Dendritic cell treated with granulocyte-macrophage colony-stimulating factor and Interleukin-4, amounts not matched to agents 40 ng/mL and 50 ng/mL, for 4 days (primary cell): ENCODE measurements at regions of chr14 and their contacts with region 1.

Region 1: GRCh38 chr14:103546652-103547454 is 15.6 kb downstream of the BAG5 start:
- H3K4me3 Mint-ChIP-seq: no peak overlapping the region
- H3K27ac Mint-ChIP-seq: no peak overlapping the region
- H3K4me1 Mint-ChIP-seq: no peaks in the 10 kb centered on the region
- H3K27me3 Mint-ChIP-seq: peaks cover 4% of the 10 kb centered on the region

Region 2: DNA sequence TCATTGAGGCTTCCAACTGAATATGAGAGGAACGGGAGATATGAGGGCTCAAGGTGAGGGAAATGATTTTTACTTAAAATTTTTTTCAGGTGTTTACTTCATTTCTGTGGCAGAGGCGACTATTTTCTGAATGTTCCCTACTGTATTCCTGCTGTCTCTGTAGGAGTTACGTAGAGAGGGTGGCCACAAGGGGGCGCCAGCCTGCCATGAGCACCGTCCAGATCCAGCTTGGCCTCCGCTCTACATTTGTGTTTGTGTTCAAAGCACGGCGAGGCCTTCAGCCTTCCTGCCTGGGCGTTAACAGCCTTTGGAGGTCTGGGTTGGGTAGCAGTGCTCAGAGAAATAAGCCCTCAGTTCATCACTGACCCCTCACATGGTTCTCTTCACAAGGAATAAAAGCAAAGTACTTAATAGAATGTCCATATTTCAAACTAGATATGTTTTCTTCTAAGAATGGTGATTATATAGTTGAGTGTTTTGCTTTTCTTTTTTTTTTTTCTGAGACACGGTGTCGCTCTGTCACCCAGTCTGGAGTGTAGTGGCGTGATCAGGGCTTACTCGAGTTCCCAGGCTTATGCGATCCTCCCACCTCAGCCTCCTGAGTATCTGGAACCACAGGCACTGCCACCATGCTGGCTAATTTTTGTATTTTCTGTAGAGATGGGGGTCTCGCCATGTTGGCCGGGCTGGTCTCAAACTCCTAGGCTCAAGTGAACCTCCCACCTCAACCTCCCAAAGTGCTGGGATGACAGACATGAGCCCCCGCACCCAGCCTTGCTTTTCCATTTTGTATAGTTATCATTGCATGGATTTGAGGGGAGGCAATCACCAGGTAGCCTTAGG is 46.5 kb before region 1 on chr14:
- intact Hi-C with region 1: loop called (anchors 1 kb)
- H3K4me3 Mint-ChIP-seq: no peak overlapping the region
- H3K27ac Mint-ChIP-seq: no peak overlapping the region
- H3K4me1 Mint-ChIP-seq: peaks cover 5% of the 10 kb centered on the region
- H3K27me3 Mint-ChIP-seq: no peaks in the 10 kb centered on the region

Region 3: DNA sequence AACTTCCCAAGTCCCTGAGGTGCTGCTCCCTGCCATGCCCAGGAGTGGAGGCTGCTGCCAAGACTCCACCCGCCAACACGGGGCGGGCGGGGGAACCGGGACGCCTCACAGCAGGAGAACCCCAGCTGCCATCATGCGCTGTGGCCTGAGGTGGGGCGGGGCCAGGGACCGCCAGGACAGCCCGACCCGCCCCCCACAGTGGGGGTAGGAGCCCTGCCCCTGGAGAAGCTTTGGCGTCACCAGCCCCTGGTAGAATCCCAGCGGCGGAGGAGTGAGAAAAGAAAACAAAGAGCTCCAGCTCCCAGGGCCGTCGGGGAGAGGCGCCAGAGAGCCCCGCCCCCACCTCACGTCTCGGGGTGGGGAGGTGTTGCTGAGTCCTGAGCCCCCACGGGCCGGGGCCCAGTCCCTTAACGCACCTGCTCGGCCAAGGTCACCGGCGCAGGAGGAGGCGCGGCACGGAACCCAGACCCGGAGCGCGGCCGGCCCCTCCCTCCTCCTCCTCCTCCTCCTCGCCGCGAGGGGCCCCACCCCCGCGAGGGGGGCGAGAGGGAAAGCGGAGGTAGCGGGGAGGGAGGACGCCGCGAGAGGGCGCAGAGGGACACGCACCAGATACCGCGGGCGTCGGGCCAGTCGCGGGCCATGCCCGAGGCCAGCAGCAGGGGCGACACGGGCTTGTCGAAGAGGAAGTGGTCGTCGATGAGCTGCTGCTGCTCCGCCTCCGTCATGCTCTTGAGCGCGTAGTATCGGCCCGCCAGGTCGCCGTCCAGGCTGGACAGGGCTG is 26.0 kb before region 1 on chr14:
- intact Hi-C with region 1: loop called (anchors 1 kb)
- H3K4me3 Mint-ChIP-seq: peak overlapping the region; percentile 63
- H3K27ac Mint-ChIP-seq: no peak overlapping the region
- H3K4me1 Mint-ChIP-seq: peaks cover 47% of the 10 kb centered on the region
- H3K27me3 Mint-ChIP-seq: peaks cover 25% of the 10 kb centered on the region

Region 4: DNA sequence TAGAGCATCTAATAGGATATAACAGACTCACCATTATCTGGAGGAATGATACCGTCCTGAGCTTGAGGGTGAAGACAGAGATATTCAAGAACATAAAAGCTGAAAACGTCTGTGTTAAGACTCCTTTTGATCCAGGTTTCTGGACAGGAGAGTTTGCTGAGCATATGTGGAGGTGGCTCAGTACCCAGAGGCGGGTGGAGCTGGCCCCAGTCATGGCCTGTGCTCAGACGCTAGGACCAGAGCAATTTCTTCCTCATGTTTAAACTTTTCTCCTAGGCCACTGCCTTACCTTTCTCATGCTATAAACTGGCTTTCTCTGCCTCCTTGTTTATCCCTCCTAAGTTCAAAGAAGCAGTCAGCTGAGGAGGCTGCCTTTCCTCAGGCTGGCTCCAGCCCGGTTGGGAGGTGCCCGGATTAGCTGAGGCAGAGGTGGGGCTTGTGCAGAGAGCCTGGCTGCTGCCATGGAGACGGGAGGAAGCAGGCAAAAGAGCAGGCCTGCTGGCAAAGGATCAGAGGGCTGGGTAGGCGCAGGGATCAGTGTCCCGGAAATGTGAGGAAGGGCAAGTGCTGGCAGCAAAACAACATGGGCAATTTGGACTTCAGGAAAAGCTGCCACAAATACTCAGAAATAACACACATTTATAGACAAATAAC is 29.6 kb after region 1 on chr14:
- intact Hi-C with region 1: no loop called
- H3K4me3 Mint-ChIP-seq: no peak overlapping the region
- H3K27ac Mint-ChIP-seq: peak overlapping the region; percentile 18
- H3K4me1 Mint-ChIP-seq: no peaks in the 10 kb centered on the region
- H3K27me3 Mint-ChIP-seq: no peaks in the 10 kb centered on the region

Region 5: GRCh38 chr14:103675957-103676356 is 129.1 kb after region 1 on chr14:
- intact Hi-C with region 1: no loop called
- H3K4me3 Mint-ChIP-seq: no peak overlapping the region
- H3K27ac Mint-ChIP-seq: no peak overlapping the region
- H3K4me1 Mint-ChIP-seq: peaks cover 13% of the 10 kb centered on the region
- H3K27me3 Mint-ChIP-seq: no peaks in the 10 kb centered on the region

Region 6: DNA sequence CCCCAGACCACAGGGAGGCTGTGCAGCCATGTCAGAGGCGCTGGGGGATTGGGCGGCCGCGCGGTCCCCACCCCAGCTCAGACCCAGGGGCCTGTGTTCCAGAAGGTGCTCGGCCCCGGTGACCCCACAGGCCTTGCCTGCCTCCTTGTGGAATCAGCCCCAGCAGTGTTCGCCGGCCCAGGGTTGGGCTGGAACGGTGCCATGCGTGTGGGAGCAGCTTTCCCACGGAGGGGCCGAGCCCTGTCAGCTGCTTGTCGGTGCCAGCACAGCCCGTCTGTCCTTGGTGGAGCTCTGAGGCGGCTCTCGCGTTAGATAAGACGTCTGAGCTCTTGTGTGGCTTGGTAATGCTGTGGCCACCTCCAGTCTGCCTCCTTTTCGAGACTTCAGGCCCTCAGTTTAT is 177.3 kb after region 1 on chr14:
- intact Hi-C with region 1: no loop called
- H3K4me3 Mint-ChIP-seq: no peak overlapping the region
- H3K27ac Mint-ChIP-seq: no peak overlapping the region
- H3K4me1 Mint-ChIP-seq: peaks cover 20% of the 10 kb centered on the region
- H3K27me3 Mint-ChIP-seq: no peaks in the 10 kb centered on the region